ENCODE measurements at regions of chr18 and their contacts with region 1.

Region 1: DNA sequence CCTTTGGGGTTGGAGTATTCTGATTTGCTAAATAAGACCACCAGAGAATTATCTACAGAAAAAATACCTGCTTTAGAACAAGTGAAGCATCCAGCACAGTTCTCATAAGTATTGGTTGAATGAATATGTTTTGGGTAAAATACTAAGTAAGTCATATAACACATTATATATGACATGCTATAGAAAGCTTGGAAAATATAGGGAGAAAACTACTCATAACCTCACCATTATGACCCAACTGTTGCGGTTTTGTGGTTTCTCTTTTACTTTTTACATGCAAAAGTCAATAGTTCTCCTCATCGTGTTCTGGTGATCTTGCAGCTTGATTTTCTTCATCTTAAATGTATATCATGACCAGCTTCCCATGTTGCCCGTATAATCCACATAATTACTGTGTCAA is 66.2 kb downstream of the DIPK1C start:
- DNase-seq: no peak
- H3K4me3 Mint-ChIP-seq: no peak overlapping the region
- H3K27ac Mint-ChIP-seq: peak overlapping the region; percentile 26
- H3K4me1 Mint-ChIP-seq: peaks cover 17% of the 10 kb centered on the region
- H3K27me3 Mint-ChIP-seq: peaks cover 35% of the 10 kb centered on the region

Region 2: DNA sequence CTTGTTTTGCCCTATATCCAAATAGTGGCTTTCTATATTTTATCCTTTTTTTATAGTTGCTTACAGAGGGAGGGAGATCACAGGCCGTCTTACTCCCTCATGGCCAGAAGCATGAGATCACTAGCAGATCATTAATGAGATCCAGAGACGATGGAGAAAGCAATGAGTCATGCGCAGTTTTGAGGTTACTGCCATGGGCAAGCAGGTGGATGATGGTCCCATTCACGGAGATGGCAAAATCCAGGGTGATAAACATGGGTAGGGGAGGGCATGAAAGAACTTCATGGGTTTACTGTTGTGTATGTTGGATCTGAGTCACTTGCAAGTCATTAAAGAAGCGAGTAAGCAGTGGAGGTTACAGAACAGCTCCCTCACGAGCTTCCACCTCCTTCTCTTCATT is 14.9 kb before region 1 on chr18:
- intact Hi-C with region 1: loop called (anchors 2 kb)
- DNase-seq: no peak
- H3K4me3 Mint-ChIP-seq: no peak overlapping the region
- H3K27ac Mint-ChIP-seq: no peak overlapping the region
- H3K4me1 Mint-ChIP-seq: peaks cover 43% of the 10 kb centered on the region
- H3K27me3 Mint-ChIP-seq: peaks cover 11% of the 10 kb centered on the region

Region 3: DNA sequence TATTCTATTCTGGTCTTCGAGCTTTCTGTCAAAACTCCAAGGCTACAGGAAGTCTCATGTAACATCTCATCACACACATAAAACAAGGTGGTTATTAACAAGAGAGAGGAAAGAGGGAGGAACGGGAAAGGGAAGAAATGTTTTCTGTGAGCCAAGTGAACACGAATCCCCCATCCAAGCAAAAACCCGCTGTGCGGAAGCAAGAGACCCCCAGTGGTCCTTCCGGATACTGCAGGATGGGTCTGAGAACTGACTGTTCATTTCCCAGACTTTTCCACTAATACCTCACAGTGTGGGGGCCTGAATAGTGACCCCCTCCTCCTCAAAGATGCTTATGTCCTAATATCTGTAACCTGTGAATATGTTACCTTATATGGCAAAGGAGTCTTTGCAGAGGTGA is 85.2 kb after region 1 on chr18:
- intact Hi-C with region 1: loop called (anchors 5 kb)
- DNase-seq: no peak
- H3K4me3 Mint-ChIP-seq: no peak overlapping the region
- H3K27ac Mint-ChIP-seq: no peak overlapping the region
- H3K4me1 Mint-ChIP-seq: peaks cover 4% of the 10 kb centered on the region
- H3K27me3 Mint-ChIP-seq: peaks cover 2% of the 10 kb centered on the region